Cardiac septum (tissue), 1 donor: ENCODE measurements at regions of chr1 and their contacts with region 1.

Region 1: DNA sequence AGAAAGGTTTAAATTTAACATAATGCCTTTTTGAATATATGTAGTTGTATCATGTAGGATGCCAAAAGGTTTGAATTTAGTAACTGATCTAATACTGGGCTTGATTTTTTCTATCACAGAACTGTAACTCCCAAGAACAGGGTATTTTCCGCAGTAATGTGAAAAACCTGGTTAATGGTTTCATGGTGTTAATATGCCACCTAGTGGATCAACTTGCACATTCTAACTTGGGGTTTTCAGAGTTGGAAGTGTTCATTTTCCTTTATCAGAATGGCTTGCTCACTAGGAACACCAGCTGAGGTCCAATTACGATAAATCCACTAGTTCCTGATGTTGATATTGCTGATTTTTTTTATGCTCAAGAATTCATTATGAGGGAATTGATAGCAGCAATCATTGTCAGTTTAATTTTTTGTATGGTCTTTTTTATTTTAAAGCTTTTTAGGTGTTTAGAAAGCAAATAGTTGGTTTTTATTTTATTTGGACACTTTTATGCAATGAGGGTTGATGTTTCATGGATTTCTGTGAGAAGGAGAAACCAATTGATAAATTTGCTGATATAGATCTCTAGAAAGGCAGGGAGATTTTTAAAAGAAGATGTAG is 157.2 kb downstream of the PLA2G4A start:
- DNase-seq: no peak

Region 2: DNA sequence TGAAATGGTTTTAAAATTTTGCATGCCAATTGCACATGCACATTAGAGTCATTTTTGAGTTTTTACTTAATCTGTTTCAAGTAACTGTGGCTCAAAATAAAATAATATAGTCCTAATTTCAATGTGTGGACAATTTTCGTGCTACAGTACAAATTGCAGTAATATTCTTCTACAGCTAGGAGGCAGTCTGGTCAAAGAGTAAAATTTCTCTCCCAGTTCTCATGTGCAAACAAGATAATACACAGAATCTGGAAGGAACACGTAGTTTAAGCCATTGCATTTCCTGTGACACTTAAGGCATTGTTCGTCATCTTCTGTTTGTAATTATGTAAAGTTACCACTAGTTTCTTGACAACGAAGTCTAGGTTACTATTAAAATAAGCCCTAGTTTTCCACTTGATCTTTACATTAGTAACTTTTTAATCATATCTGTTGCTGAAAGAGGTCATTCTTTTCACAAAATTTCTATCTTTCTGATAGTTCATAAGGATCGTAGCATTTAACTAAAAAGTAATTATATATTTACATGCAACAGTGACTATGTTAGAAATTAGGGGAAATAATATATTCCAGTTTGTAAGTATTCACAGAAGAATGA is 581.4 kb before region 1 on chr1:
- intact Hi-C with region 1: loop called (anchors 5 kb)
- DNase-seq: no peak

Region 3: GRCh38 chr1:186482661-186483255 is 503.2 kb before region 1 on chr1:
- intact Hi-C with region 1: loop called (anchors 5 kb)
- DNase-seq: no peak

Region 4: GRCh38 chr1:186605762-186606350 is 380.1 kb before region 1 on chr1:
- intact Hi-C with region 1: loop called (anchors 5 kb)
- DNase-seq: no peak

Region 5: GRCh38 chr1:186763107-186763506 is 222.9 kb before region 1 on chr1:
- intact Hi-C with region 1: no loop called
- DNase-seq: no peak

Region 6: GRCh38 chr1:187588917-187589316 is 602.9 kb after region 1 on chr1:
- intact Hi-C with region 1: no loop called
- DNase-seq: no peak